Heart right ventricle (tissue), 16 donors: ENCODE measurements at regions of chr13 and their contacts with region 1.

Region 1: DNA sequence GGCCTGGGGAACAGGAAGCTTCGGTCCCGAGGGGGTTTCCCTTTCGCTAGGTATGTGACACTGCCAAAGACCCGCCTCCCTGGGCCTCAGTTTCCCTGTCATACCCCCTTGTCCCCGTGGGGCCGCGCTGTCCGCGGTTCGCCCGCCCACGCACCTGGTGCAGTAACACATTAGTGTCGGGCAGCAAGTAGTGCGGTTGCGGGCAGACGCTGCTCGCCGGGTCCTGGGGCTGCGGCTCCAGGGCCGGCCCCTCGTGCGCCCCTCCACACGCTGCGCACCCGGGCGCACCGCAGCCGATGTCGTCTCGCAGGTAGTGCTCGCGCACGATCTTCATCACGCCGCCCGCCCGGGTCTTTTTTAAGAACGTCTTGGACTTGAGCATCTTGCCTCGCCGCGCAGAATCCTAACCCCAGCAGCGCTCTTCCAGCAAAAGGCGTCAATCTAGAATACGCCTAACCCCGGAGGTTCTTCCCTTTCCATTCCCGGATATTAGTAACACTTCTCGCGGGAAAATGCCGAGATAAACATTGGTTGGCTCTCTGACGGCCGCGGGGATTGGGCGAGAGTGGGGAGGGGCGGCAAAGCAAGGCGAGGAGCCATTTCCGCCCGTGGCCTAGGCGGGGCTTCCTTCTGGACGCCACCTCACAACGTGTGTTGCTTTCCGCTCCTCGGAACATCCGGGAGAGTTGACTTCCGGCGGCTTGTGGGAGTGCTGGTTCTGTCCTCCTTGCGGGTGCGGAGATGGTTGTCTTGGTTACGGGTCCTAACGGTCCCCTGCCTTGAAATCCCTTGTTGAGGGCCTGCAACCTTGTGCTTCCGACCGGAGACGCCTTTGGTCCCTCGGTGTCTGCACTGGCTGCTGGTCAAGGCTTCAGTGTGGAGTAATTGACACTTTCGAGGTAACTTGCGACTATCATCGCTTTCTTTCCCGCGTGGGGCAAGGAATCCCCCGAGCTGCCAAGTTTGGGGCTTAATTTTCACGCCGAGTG is at the starts of genes DIS3 and PIBF1:
- DNase-seq: peak; percentile 95 to 98
- ATAC-seq: peak; percentile 100
- H3K4me3 ChIP-seq: peak within 1 kb of the TSS; percentile 85 to 99 (median 94)
- H3K27ac ChIP-seq: peak within 1 kb of the TSS; percentile 38 to 95 (median 90)
- H3K4me1 ChIP-seq: peaks cover 0 to 56% (median 40%) of the 10 kb centered on the region in 9 donors
- H3K27me3 ChIP-seq: no peaks in the 10 kb centered on the region
- CTCF ChIP-seq: peak in 1 of 9 donors; percentile 10
- total RNA-seq, gene DIS3: 13.6 to 19.6 (median 17.2) TPM
- total RNA-seq, gene PIBF1: 12.1 to 20.9 (median 16.7) TPM

Region 2: GRCh38 chr13:71499235-71499634 is 1282.5 kb before region 1 on chr13:
- intact Hi-C with region 1: no loop called
- DNase-seq: no peak
- ATAC-seq: peak in 6 of 8 donors; percentile 23 to 76 (median 62)
- H3K4me3 ChIP-seq: no peak overlapping the region
- H3K27ac ChIP-seq: peak overlapping the region in 7 of 10 donors; percentile 13 to 69 (median 58)
- H3K4me1 ChIP-seq: peaks cover 0 to 29% (median 0%) of the 10 kb centered on the region in 9 donors
- H3K27me3 ChIP-seq: no peaks in the 10 kb centered on the region
- CTCF ChIP-seq: no peak

Region 3: GRCh38 chr13:72379581-72379980 is 402.2 kb before region 1 on chr13:
- intact Hi-C with region 1: no loop called
- DNase-seq: no peak
- ATAC-seq: no peak
- H3K4me3 ChIP-seq: no peak overlapping the region
- H3K27ac ChIP-seq: no peak overlapping the region
- H3K4me1 ChIP-seq: peaks cover 0 to 7% (median 0%) of the 10 kb centered on the region in 9 donors
- H3K27me3 ChIP-seq: no peaks in the 10 kb centered on the region
- CTCF ChIP-seq: no peak

Region 4: DNA sequence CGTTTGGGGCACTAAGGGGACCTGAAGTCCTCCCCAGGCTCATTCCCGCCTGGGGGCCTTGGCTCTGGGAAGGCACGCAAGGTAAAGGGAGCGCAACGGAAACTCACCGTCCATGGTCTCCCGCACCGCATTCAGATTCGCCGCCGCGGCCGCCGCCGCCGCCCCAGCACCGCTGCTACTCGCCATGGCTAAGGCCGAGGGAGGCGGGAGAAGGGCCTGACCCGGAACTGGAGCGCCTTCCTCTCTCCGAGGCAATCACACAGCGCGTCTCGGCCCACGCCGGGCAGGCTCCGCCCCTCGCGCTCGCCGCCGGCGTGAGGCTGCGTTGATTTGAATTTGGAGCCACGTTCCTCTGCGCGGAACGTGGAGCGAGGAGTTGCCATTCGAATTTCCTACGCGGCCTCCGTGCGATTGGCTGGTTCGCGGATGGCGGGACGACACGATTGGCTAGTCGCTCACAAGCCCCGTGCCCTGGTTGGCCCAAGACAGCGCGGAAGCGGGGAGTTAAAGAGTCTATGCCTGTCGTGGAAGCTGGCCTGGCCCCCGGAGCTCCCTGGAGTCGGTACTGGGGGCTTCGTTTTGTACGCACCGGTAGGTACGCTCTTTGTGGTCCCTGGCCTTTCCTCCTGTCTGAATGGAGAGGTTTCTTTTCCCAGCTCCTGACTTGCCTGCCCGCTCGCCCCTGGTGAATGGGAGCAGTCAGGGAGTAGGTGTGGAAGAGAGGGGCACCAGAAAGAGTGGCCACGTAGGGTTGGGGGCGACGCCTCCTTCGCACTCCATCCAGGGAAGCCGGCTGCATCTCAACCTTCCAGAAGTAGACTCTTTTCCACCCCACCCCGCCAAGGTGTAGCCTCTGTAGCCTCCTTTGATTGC is 54.1 kb before region 1 on chr13 and contains the starts of genes BORA and MZT1:
- intact Hi-C with region 1: loop called in 5 of 10 experiments (anchors 2 to 10 kb)
- DNase-seq: peak; percentile 95
- ATAC-seq: peak; percentile 99 to 100 (median 99)
- H3K4me3 ChIP-seq: peak within 1 kb of the TSS; percentile 65 to 96 (median 80)
- H3K27ac ChIP-seq: peak within 1 kb of the TSS in 9 of 10 donors; percentile 32 to 88 (median 63)
- H3K4me1 ChIP-seq: peaks cover 0 to 39% (median 20%) of the 10 kb centered on the region in 9 donors
- H3K27me3 ChIP-seq: no peaks in the 10 kb centered on the region
- CTCF ChIP-seq: no peak
- total RNA-seq, gene BORA: 0.42 to 1.6 (median 0.91) TPM
- total RNA-seq, gene MZT1: 5.8 to 9.6 (median 6.6) TPM

Region 5: DNA sequence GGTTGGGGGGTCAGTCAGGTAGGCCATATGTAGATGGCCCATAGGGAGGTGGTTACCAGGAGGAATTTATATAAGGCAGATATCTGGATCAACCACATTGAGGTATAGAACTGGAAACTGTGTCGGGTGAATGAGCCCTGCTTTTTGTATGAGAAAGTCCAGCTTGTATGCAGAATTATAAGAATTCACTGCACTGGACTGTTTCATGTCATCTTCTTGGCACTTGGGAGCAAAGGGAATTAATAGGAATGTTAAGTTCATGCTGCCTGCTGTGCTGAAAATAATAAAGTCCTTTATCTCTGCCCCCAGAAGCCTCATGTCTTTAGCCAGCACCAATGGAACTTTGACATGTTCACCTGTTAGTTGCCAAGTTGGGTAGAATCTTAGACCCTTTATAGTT is 41.7 kb before region 1 on chr13:
- intact Hi-C with region 1: no loop called
- DNase-seq: no peak
- ATAC-seq: no peak
- H3K4me3 ChIP-seq: no peak overlapping the region
- H3K27ac ChIP-seq: no peak overlapping the region
- H3K4me1 ChIP-seq: no peaks in the 10 kb centered on the region
- H3K27me3 ChIP-seq: no peaks in the 10 kb centered on the region
- CTCF ChIP-seq: no peak

Region 6: GRCh38 chr13:73390100-73390499 is 608.4 kb after region 1 on chr13:
- intact Hi-C with region 1: no loop called
- DNase-seq: no peak
- ATAC-seq: no peak
- H3K4me3 ChIP-seq: no peak overlapping the region
- H3K27ac ChIP-seq: no peak overlapping the region
- H3K4me1 ChIP-seq: no peaks in the 10 kb centered on the region
- H3K27me3 ChIP-seq: no peaks in the 10 kb centered on the region
- CTCF ChIP-seq: no peak